Activated T-helper 2 cell treated with anti-CD3 and anti-CD28 coated beads, Interferon-gamma antibody, Interleukin-2, Interleukin-4, amounts not matched to agents 10 μg/mL and 5 μg/mL and 100 μg/mL, durations not matched to agents 14 hours and 24 hours and 36 hours (primary cell): ENCODE measurements at regions of chr1 and their contacts with region 1.

Region 1: DNA sequence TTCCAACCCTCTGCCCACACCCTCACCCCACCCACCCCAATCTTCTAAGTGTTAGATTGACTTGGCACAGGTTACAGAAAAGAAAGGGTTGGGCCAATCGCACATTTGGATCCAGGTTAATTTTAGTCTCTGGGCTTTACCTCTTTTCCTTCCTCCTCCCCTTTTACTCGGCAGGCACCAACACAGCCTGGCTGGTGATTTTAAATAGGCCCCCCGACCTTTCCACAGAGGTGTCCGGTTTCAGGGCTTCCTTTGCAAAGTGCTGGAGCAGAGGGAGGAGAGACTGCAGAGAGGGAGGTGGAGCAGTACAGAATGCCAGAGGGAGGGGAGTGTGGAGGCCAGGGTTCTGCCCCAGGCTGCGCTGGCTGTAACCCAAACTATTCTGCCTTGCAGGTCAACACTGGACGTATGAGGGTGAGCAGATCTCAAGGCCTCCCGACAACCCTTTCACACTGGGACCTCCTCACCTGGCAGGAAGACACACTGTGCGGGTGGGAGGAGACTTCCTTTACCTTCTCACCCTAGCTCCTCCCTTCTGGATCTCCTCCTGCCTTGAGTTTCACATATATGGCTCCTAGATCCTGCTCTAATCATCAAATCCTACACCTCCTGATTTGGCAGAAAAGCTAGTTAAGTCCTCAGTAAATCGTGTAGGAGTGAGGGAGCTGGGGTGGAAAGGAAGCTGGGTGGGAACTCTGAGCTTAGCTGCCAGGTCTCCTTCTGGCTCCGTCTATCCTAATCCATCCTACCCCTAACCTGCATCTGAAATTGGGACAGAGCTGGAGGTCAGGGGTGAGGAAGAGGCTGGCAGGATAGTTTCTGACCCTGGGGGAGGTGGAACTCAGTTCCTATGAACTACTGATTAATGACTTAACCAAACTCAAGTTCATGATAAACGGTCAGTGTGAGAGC is 2.4 kb downstream of the CA14 start:
- DNase-seq: no peak
- H3K4me3 Mint-ChIP-seq: no peak overlapping the region
- H3K27ac Mint-ChIP-seq: no peak overlapping the region
- H3K4me1 Mint-ChIP-seq: peaks cover 8% of the 10 kb centered on the region
- H3K27me3 Mint-ChIP-seq: peaks cover 38% of the 10 kb centered on the region

Region 2: GRCh38 chr1:150281837-150282653 is 22.0 kb after region 1 on chr1 and contains the start of gene CIART:
- intact Hi-C with region 1: loop called (anchors 1 kb)
- DNase-seq: peak; percentile 72
- H3K4me3 Mint-ChIP-seq: peak within 1 kb of the TSS; percentile 90
- H3K27ac Mint-ChIP-seq: peak within 1 kb of the TSS; percentile 86
- H3K4me1 Mint-ChIP-seq: peaks cover 24% of the 10 kb centered on the region
- H3K27me3 Mint-ChIP-seq: peaks cover 17% of the 10 kb centered on the region
- total RNA-seq, gene CIART: 4.2 TPM in 2 replicates

Region 3: GRCh38 chr1:150321826-150322166 is 61.8 kb after region 1 on chr1:
- intact Hi-C with region 1: loop called (anchors 1 kb)
- DNase-seq: no peak
- H3K4me3 Mint-ChIP-seq: peak overlapping the region; percentile 100
- H3K27ac Mint-ChIP-seq: peak overlapping the region; percentile 99
- H3K4me1 Mint-ChIP-seq: peaks cover 18% of the 10 kb centered on the region
- H3K27me3 Mint-ChIP-seq: no peaks in the 10 kb centered on the region

Region 4: GRCh38 chr1:150464422-150464826 is 204.4 kb after region 1 on chr1:
- intact Hi-C with region 1: loop called (anchors 1 kb)
- DNase-seq: peak; percentile 53
- H3K4me3 Mint-ChIP-seq: no peak overlapping the region
- H3K27ac Mint-ChIP-seq: no peak overlapping the region
- H3K4me1 Mint-ChIP-seq: peaks cover 2% of the 10 kb centered on the region
- H3K27me3 Mint-ChIP-seq: no peaks in the 10 kb centered on the region

Region 5: GRCh38 chr1:150532868-150533302 is 272.9 kb after region 1 on chr1:
- intact Hi-C with region 1: loop called (anchors 5 kb)
- DNase-seq: no peak
- H3K4me3 Mint-ChIP-seq: no peak overlapping the region
- H3K27ac Mint-ChIP-seq: no peak overlapping the region
- H3K4me1 Mint-ChIP-seq: peaks cover 6% of the 10 kb centered on the region
- H3K27me3 Mint-ChIP-seq: no peaks in the 10 kb centered on the region